Left cardiac atrium (tissue), 4 donors: ENCODE measurements at regions of chr2 and their contacts with region 1.

Region 1: DNA sequence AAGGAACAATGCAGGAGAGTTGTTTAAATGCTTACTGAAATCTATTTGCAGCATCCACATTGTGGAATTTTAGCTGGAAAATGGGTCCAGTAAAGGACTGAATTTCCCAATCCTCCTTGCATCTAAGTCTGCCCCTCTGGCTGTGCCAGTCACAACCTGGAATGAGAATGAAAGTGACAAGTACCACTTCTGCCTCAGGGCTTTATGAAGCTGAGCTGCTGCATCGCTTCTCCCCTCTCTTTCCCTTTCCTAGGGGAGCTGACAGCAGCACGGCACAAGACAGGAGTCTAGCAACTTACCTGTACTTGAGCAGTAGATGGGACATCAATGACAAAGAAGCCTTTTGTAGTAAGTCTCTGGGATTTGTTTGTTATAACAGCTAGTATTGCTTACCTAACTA is 27.3 kb upstream of the THSD7B start:
- DNase-seq: no peak
- ATAC-seq: no peak

Region 2: GRCh38 chr2:135391957-135392356 is 1346.1 kb before region 1 on chr2:
- intact Hi-C with region 1: no loop called
- DNase-seq: no peak
- ATAC-seq: no peak

Region 3: DNA sequence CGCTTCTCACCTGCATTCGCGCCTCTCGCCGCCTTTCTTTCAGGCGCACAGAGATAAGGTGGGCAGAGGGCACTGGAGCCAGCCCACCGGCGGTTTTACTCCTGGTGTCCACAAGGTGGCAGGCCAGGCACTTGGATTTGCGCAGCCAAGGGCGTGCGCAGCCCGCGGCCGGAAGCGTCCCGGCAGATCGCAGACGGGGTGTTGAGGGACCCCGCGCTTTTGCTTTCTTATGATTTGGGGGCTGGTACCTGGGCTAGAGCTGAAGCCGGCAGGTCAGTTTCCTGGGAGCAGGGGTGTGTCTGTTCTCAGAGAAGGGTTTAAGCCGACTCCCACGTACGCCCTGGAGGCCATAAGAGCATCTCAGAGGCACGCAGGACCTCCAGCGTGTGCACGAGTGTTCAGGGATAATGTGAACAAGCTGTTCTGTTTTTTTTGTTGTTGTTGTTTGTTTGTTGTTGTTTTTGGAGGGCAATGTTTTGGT is 314.5 kb before region 1 on chr2:
- intact Hi-C with region 1: loop called in 1 of 2 experiments (anchors 5 kb)
- DNase-seq: peak; percentile 75
- ATAC-seq: peak; percentile 95

Region 4: GRCh38 chr2:136486115-136486514 is 251.9 kb before region 1 on chr2:
- intact Hi-C with region 1: no loop called
- DNase-seq: no peak
- ATAC-seq: no peak